GM12878 (cell line): ENCODE measurements at regions of chr15 and their contacts with region 1.

Region 1: DNA sequence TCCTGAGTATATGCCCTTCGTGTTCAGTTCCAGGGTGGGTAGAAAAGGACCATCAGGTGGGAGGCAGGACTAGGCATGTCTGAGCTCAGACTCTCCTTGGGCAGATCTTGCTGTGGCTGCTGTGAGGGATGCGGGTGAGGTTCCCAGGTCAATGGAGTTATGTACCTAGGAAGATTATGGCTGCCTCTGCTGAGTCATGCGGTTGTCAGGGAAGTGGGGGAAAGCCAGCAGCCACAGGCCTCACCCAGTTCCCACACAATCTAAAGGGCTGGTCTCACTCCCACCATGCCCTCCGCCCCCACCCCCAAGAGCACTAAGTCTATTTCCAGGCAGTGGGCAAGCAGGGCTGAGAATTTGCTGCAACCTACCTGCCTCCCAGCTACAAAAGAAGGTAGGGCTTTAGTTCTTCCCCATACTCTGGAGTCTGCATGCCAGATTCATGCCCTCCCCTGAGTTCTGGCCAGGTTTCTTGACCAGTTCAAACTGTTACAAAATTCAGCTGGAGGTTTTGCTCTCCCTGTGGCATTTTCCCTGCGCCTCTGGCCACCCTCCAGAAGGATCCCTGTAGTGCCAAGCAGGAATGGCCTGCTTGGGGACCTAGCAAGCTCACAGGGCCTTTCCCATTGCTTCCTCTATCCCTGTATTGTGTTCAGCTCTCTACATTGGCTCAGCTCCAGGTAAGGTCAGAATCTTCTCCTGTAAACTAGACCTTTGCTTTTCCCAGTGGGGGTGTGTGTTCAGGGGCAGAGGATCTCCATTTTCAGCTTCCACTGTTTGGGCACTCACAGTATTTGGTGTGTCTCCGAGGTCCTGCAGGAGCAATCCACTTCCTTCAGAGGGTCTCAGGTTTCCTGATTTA is 12.7 kb upstream of the TMCO5A start:
- DNase-seq: no peak
- ATAC-seq: no peak
- H3K4me3 ChIP-seq: no peak overlapping the region
- H3K27ac ChIP-seq: no peak overlapping the region
- H3K4me1 ChIP-seq: no peaks in the 10 kb centered on the region
- H3K27me3 ChIP-seq: no peaks in the 10 kb centered on the region
- CTCF ChIP-seq: no peak
- EP300 ChIP-seq: no peak
- POLR2A ChIP-seq: no peak
- RAD21 ChIP-seq: no peak

Region 2: DNA sequence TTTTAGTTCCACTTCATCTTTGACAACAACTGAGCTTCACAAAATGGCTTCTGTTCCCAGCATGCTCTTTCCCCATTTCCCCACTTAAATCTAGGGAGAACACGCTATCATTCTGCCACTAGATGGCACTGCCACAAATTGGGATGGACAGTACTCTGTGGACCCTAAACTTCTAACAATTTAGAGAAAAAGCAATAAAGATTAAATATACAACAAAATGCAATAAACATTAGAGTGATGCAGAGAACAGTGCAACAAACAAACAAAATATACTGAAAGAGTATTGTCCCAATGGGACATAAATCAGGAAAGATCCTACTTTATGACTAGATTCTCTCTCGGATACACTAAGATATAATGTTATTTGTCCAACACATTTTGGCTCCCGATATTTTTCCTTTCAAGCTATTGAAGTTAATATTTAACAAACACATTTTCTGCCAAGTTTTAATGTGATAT is 157.0 kb before region 1 on chr15:
- CTCF ChIA-PET with region 1: no interaction called
- POLR2A ChIA-PET with region 1: no interaction called
- RAD21 ChIA-PET with region 1: no interaction called
- SMC1A ChIA-PET with region 1: no interaction called
- in situ Hi-C with region 1: no loop called
- intact Hi-C with region 1: no loop called
- DNase-seq: no peak
- ATAC-seq: peak; percentile 80
- H3K4me3 ChIP-seq: no peak overlapping the region
- H3K27ac ChIP-seq: no peak overlapping the region
- H3K4me1 ChIP-seq: no peaks in the 10 kb centered on the region
- H3K27me3 ChIP-seq: no peaks in the 10 kb centered on the region
- CTCF ChIP-seq: peak; percentile 21 to 45 (median 36); a peak in 4 of 6 replicates
- EP300 ChIP-seq: no peak
- POLR2A ChIP-seq: no peak
- RAD21 ChIP-seq: no peak

Region 3: DNA sequence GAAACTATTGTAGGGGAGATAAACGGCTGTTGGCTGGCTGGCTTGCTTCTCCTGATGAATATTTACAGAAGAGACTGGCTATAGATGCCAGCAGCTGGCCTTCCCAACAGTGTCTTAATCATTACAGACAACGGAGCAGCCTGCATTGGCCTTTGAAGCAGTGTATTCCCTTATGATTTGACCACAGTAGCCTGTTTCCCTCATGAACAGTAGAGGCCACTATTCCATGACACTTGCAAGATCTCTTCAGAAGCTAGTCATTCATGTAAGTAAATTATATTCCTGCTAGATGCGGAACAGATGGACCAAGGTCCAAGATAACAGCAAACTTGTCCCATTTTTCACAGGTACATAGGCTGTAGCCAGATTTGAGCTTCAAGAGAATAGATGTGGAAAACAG is 60.0 kb after region 1 on chr15:
- CTCF ChIA-PET with region 1: no interaction called
- POLR2A ChIA-PET with region 1: no interaction called
- RAD21 ChIA-PET with region 1: no interaction called
- SMC1A ChIA-PET with region 1: no interaction called
- in situ Hi-C with region 1: no loop called
- intact Hi-C with region 1: loop called (anchors 10 kb)
- DNase-seq: no peak
- ATAC-seq: 0 out of 3 replicates have a peak, but pooled peaks have one; percentile 24
- H3K4me3 ChIP-seq: no peak overlapping the region
- H3K27ac ChIP-seq: no peak overlapping the region
- H3K4me1 ChIP-seq: no peaks in the 10 kb centered on the region
- H3K27me3 ChIP-seq: no peaks in the 10 kb centered on the region
- CTCF ChIP-seq: peak in 2 of 3 experiments; percentile 26 to 32; a peak in 2 of 6 replicates
- EP300 ChIP-seq: no peak
- POLR2A ChIP-seq: no peak
- RAD21 ChIP-seq: no peak

Region 4: DNA sequence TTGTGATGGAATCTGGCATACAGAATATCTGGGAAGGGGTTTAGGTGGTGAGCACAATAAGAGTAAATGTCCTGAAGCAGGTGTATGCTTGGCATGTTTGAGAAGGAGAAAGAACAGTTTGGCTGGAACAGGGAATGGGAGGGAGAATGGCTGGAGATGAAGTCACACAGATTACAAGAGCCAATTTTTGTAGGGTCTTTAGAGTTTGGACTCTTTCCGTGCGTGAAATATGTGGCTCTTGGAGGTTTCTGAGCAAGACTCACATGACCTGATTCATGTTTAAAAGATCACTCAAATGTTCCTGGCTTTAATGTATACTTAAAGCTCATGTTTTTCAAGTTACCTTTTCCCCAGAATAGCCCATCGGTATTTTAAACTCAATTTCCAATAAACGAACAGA is 363.7 kb after region 1 on chr15:
- CTCF ChIA-PET with region 1: no interaction called
- POLR2A ChIA-PET with region 1: no interaction called
- RAD21 ChIA-PET with region 1: no interaction called
- SMC1A ChIA-PET with region 1: no interaction called
- in situ Hi-C with region 1: no loop called
- intact Hi-C with region 1: no loop called
- DNase-seq: no peak
- ATAC-seq: no peak
- H3K4me3 ChIP-seq: no peak overlapping the region
- H3K27ac ChIP-seq: no peak overlapping the region
- H3K4me1 ChIP-seq: no peaks in the 10 kb centered on the region
- H3K27me3 ChIP-seq: no peaks in the 10 kb centered on the region
- CTCF ChIP-seq: no peak
- EP300 ChIP-seq: no peak
- POLR2A ChIP-seq: no peak
- RAD21 ChIP-seq: no peak

Region 5: DNA sequence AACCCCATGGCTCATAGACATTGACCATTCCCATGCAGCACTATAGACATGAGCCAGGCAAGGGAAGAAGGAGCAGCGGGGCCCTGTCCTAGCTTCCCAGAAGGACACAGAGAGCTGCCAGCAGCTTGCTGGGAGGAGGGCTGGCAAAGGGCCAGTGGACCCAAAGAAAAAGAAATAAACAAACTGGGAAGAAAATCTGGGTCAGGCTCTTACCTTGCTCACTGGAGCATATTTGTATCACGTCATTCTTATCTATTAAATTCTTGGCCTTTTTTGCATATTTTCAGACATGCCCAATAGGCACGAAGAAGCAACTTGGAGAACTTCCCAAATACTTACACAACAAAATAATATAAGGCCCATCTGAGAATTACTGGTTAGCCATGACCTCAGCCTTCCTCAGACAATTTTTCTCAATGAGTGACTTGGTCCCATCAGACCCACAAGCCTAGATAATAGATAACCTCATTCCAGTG is 614.5 kb after region 1 on chr15:
- CTCF ChIA-PET with region 1: no interaction called
- POLR2A ChIA-PET with region 1: no interaction called
- RAD21 ChIA-PET with region 1: no interaction called
- SMC1A ChIA-PET with region 1: no interaction called
- in situ Hi-C with region 1: no loop called
- intact Hi-C with region 1: no loop called
- DNase-seq: no peak
- ATAC-seq: no peak
- H3K4me3 ChIP-seq: no peak overlapping the region
- H3K27ac ChIP-seq: no peak overlapping the region
- H3K4me1 ChIP-seq: no peaks in the 10 kb centered on the region
- H3K27me3 ChIP-seq: no peaks in the 10 kb centered on the region
- CTCF ChIP-seq: no peak
- EP300 ChIP-seq: no peak
- POLR2A ChIP-seq: no peak
- RAD21 ChIP-seq: no peak